CD8-positive, alpha-beta memory T cell (primary cell): ENCODE measurements at regions of chr4 and their contacts with region 1.

Region 1: DNA sequence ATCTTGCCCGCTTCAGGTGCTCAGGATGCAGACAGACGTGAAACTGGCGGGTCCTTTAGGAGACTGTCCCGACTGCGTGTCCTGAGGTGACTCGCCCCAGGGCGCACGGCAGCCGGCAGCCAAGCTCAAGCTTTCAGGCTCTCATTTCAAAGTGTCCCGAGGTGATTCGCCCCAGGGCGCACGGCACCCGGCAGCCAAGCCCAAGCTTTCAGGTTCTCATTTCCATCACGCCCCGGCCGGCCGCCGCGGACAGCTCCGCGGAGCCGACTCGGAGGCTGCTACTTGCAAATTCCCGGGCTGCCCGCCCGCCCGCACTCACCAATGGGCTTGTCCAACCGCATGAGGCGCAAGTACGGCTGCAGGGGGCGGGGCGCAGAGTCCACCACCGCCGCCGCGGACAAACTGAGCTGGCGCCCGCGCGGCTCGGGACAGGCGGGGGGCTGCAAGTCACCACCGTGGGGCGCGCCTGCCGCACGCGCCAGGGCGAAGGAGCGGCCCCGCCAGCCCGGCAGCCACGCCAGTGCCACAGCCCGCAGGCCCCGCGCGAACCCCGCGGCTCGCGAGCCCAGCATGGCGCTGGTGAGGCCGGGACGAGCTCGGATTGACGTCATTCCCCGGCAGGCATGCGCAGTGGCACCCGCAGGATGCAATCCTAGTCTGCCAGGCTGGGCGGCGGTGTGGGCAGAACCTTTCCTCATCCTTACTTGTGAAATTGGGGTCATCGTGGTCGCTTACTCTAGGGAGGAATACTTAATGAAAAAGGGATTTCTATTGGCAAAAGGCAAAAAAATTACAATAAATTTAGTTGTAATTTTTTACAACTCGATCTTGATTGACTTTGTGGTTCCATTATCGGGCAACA is at the start of gene COQ2:
- DNase-seq: peak; percentile 92 to 96 (median 94)
- H3K4me3 ChIP-seq: peak within 1 kb of the TSS; percentile 69
- H3K4me3 Mint-ChIP-seq: peak within 1 kb of the TSS; percentile 89 to 99 (median 99)
- H3K27ac ChIP-seq: peak within 1 kb of the TSS; percentile 82
- H3K27ac Mint-ChIP-seq: peak within 1 kb of the TSS; percentile 94 to 100 (median 98)
- H3K4me1 ChIP-seq: peaks cover 12% of the 10 kb centered on the region
- H3K4me1 Mint-ChIP-seq: peaks cover 34 to 44% (median 36%) of the 10 kb centered on the region in 3 donors
- H3K27me3 ChIP-seq: no peaks in the 10 kb centered on the region
- H3K27me3 Mint-ChIP-seq: no peaks in the 10 kb centered on the region
- total RNA-seq, gene COQ2: 23.6 to 24.3 TPM

Region 2: GRCh38 chr4:82998898-82999297 is 285.5 kb before region 1 on chr4:
- CTCF ChIA-PET with region 1: no interaction called
- POLR2A ChIA-PET with region 1: no interaction called
- DNase-seq: no peak
- H3K4me3 ChIP-seq: no peak overlapping the region
- H3K4me3 Mint-ChIP-seq: no peak overlapping the region
- H3K27ac ChIP-seq: no peak overlapping the region
- H3K27ac Mint-ChIP-seq: peak overlapping the region in 2 of 8 donors; percentile 7 to 50
- H3K4me1 ChIP-seq: no peaks in the 10 kb centered on the region
- H3K4me1 Mint-ChIP-seq: peaks cover 16 to 43% (median 37%) of the 10 kb centered on the region in 3 donors
- H3K27me3 ChIP-seq: no peaks in the 10 kb centered on the region
- H3K27me3 Mint-ChIP-seq: no peaks in the 10 kb centered on the region

Region 3: GRCh38 chr4:83034630-83035494 is 249.6 kb before region 1 on chr4 and contains the start of gene COPS4:
- CTCF ChIA-PET with region 1: interaction called, 11 read pairs
- POLR2A ChIA-PET with region 1: interaction called, 10 read pairs
- DNase-seq: peak; percentile 92 to 98 (median 94)
- H3K4me3 ChIP-seq: peak within 1 kb of the TSS; percentile 63
- H3K4me3 Mint-ChIP-seq: peak within 1 kb of the TSS; percentile 92 to 100 (median 99)
- H3K27ac ChIP-seq: peak within 1 kb of the TSS; percentile 74
- H3K27ac Mint-ChIP-seq: peak within 1 kb of the TSS; percentile 89 to 99 (median 98)
- H3K4me1 ChIP-seq: peaks cover 18% of the 10 kb centered on the region
- H3K4me1 Mint-ChIP-seq: peaks cover 35 to 48% (median 44%) of the 10 kb centered on the region in 3 donors
- H3K27me3 ChIP-seq: no peaks in the 10 kb centered on the region
- H3K27me3 Mint-ChIP-seq: no peaks in the 10 kb centered on the region
- total RNA-seq, gene COPS4: 38.4 to 38.5 TPM

Region 4: GRCh38 chr4:83074086-83074704 is 210.2 kb before region 1 on chr4:
- CTCF ChIA-PET with region 1: interaction called, 45 read pairs
- POLR2A ChIA-PET with region 1: no interaction called
- DNase-seq: peak; percentile 10 to 88 (median 71)
- H3K4me3 ChIP-seq: no peak overlapping the region
- H3K4me3 Mint-ChIP-seq: peak overlapping the region; percentile 19 to 82 (median 75)
- H3K27ac ChIP-seq: no peak overlapping the region
- H3K27ac Mint-ChIP-seq: peak overlapping the region in 7 of 8 donors; percentile 38 to 72 (median 66)
- H3K4me1 ChIP-seq: no peaks in the 10 kb centered on the region
- H3K4me1 Mint-ChIP-seq: peaks cover 6 to 16% (median 12%) of the 10 kb centered on the region in 3 donors
- H3K27me3 ChIP-seq: no peaks in the 10 kb centered on the region
- H3K27me3 Mint-ChIP-seq: no peaks in the 10 kb centered on the region

Region 5: GRCh38 chr4:83217721-83218522 is 66.5 kb before region 1 on chr4:
- CTCF ChIA-PET with region 1: interaction called, 4 read pairs
- POLR2A ChIA-PET with region 1: interaction called, 13 read pairs
- DNase-seq: peak; percentile 37 to 89 (median 84)
- H3K4me3 ChIP-seq: peak overlapping the region; percentile 36
- H3K4me3 Mint-ChIP-seq: peak overlapping the region; percentile 25 to 88 (median 75)
- H3K27ac ChIP-seq: peak overlapping the region; percentile 12
- H3K27ac Mint-ChIP-seq: peak overlapping the region; percentile 64 to 95 (median 82)
- H3K4me1 ChIP-seq: peaks cover 72% of the 10 kb centered on the region
- H3K4me1 Mint-ChIP-seq: peaks cover 72 to 85% (median 81%) of the 10 kb centered on the region in 3 donors
- H3K27me3 ChIP-seq: no peaks in the 10 kb centered on the region
- H3K27me3 Mint-ChIP-seq: peaks cover 0 to 2% of the 10 kb centered on the region in 2 donors

Region 6: GRCh38 chr4:83259586-83259985 is 24.8 kb before region 1 on chr4:
- CTCF ChIA-PET with region 1: interaction called, 16 read pairs
- POLR2A ChIA-PET with region 1: no interaction called
- DNase-seq: no peak
- H3K4me3 ChIP-seq: no peak overlapping the region
- H3K4me3 Mint-ChIP-seq: no peak overlapping the region
- H3K27ac ChIP-seq: no peak overlapping the region
- H3K27ac Mint-ChIP-seq: no peak overlapping the region
- H3K4me1 ChIP-seq: peaks cover 7% of the 10 kb centered on the region
- H3K4me1 Mint-ChIP-seq: peaks cover 17 to 20% (median 18%) of the 10 kb centered on the region in 3 donors
- H3K27me3 ChIP-seq: no peaks in the 10 kb centered on the region
- H3K27me3 Mint-ChIP-seq: no peaks in the 10 kb centered on the region

Region 7: GRCh38 chr4:83455281-83456129 is 171.1 kb after region 1 on chr4 and contains the starts of genes HELQ and MRPS18C:
- CTCF ChIA-PET with region 1: interaction called, 3 read pairs
- POLR2A ChIA-PET with region 1: interaction called, 13 read pairs
- DNase-seq: peak; percentile 90 to 99 (median 96)
- H3K4me3 ChIP-seq: peak within 1 kb of the TSS; percentile 80
- H3K4me3 Mint-ChIP-seq: peak within 1 kb of the TSS; percentile 98 to 100 (median 100)
- H3K27ac ChIP-seq: peak within 1 kb of the TSS; percentile 99
- H3K27ac Mint-ChIP-seq: peak within 1 kb of the TSS; percentile 100
- H3K4me1 ChIP-seq: peaks cover 35% of the 10 kb centered on the region
- H3K4me1 Mint-ChIP-seq: peaks cover 43 to 73% (median 67%) of the 10 kb centered on the region in 3 donors
- H3K27me3 ChIP-seq: no peaks in the 10 kb centered on the region
- H3K27me3 Mint-ChIP-seq: peaks cover 0 to 2% of the 10 kb centered on the region in 2 donors
- total RNA-seq, gene HELQ: 14.0 to 15.3 TPM
- total RNA-seq, gene MRPS18C: 86.0 to 87.2 TPM

Region 8: DNA sequence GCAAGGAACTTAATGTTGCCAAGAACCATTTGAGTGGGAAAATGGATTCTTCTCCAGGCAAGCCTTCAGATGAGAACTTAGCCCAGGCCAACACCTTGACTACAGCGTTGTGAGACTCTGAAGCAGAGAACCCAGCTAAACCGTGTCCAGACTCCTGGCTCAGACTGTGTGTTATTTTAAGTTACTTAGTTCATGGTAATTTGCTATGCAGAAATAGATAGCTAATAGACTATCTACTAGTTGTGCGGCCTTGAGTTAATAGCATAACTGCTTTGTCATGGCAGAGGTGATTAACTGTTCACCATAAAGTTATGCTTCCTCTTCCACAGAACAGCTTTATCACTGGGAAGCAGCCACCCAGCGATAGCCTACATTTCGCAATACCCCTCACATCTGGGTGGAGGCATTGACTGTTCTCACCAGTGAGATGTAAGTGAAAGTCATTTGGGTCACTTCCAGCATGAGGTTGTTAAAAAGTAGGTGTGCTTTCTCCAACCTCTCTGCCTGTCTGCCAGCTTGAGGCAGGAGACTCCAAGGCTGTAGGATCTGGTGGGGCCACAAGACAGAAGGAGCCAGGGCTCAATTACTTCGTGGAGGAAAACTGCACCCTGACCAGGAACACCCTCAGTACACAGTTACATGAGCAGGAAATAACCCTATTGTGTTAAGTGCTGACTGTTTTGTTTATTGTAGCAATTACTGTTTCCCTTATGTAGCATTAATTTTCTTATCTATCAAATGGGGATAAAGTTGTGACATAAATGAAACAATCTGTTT is 345.7 kb after region 1 on chr4:
- CTCF ChIA-PET with region 1: no interaction called
- POLR2A ChIA-PET with region 1: no interaction called
- DNase-seq: no peak
- H3K4me3 ChIP-seq: no peak overlapping the region
- H3K4me3 Mint-ChIP-seq: no peak overlapping the region
- H3K27ac ChIP-seq: peak overlapping the region; percentile 12
- H3K27ac Mint-ChIP-seq: no peak overlapping the region
- H3K4me1 ChIP-seq: no peaks in the 10 kb centered on the region
- H3K4me1 Mint-ChIP-seq: no peaks in the 10 kb centered on the region
- H3K27me3 ChIP-seq: no peaks in the 10 kb centered on the region
- H3K27me3 Mint-ChIP-seq: peaks cover 9 to 41% of the 10 kb centered on the region in 2 donors